Activated CD4-positive, alpha-beta memory T cell treated with anti-CD3 and anti-CD28 coated beads for 36 hours (primary cell): ENCODE measurements at regions of chr10 and their contacts with region 1.

Region 1: GRCh38 chr10:69408318-69409175 is 8.2 kb downstream of the TACR2 start:
- DNase-seq: peak; percentile 93
- H3K4me3 Mint-ChIP-seq: peak overlapping the region; percentile 46
- H3K27ac Mint-ChIP-seq: peak overlapping the region; percentile 76
- H3K4me1 Mint-ChIP-seq: peaks cover 15% of the 10 kb centered on the region
- H3K27me3 Mint-ChIP-seq: peaks cover 2% of the 10 kb centered on the region

Region 2: GRCh38 chr10:68501691-68502090 is 906.9 kb before region 1 on chr10:
- CTCF ChIA-PET with region 1: no interaction called
- POLR2A ChIA-PET with region 1: no interaction called
- intact Hi-C with region 1: no loop called
- DNase-seq: no peak
- H3K4me3 Mint-ChIP-seq: no peak overlapping the region
- H3K27ac Mint-ChIP-seq: no peak overlapping the region
- H3K4me1 Mint-ChIP-seq: no peaks in the 10 kb centered on the region
- H3K27me3 Mint-ChIP-seq: no peaks in the 10 kb centered on the region

Region 3: GRCh38 chr10:69222157-69223027 is 186.2 kb before region 1 on chr10:
- CTCF ChIA-PET with region 1: interaction called, 4 read pairs
- POLR2A ChIA-PET with region 1: no interaction called
- intact Hi-C with region 1: loop called (anchors 5 kb)
- DNase-seq: peak; percentile 92
- H3K4me3 Mint-ChIP-seq: peak overlapping the region; percentile 55
- H3K27ac Mint-ChIP-seq: peak overlapping the region; percentile 91
- H3K4me1 Mint-ChIP-seq: peaks cover 44% of the 10 kb centered on the region
- H3K27me3 Mint-ChIP-seq: no peaks in the 10 kb centered on the region

Region 4: DNA sequence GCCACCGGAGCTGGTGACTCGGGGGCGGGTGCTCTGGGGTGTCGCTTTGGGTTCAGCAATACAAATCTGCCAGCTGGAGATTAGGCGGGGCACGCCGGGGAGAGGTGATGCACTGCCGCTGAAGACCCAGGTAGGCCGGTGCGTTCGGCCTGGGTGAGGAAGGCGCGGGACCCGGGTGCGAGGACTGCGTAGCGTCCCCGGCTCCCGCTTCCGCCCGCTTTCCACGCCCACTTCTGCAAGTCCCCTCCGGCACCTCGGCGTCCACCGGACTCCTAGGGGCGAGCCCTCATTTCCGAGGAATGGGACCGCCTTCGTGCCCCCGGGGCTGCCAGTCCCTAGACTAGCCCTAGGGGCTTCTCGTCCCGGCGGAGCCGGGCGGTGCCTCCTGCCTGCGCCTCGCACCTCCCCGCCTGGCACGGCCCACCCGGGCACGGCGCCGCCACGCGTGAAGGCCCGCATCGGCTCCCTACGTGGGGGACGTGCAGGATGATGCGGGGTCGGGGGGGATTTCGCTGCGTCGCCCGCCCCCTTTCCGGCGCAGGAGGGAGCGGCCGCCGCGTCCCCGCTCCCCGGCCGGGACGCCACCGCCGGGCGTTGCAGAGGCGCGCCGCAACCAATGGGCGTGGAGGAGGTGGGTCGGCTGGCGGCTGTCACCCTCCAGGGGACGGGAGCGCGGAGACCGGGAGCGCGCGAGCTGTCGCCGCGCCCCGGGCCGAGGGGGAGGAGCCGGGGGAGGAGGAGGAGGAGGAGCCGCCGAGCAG is 90.3 kb before region 1 on chr10:
- CTCF ChIA-PET with region 1: interaction called, 14 read pairs
- POLR2A ChIA-PET with region 1: interaction called, 4 read pairs
- intact Hi-C with region 1: loop called (anchors 2 kb)
- DNase-seq: peak; percentile 95
- H3K4me3 Mint-ChIP-seq: peak overlapping the region; percentile 99
- H3K27ac Mint-ChIP-seq: peak overlapping the region; percentile 97
- H3K4me1 Mint-ChIP-seq: peaks cover 50% of the 10 kb centered on the region
- H3K27me3 Mint-ChIP-seq: no peaks in the 10 kb centered on the region

Region 5: DNA sequence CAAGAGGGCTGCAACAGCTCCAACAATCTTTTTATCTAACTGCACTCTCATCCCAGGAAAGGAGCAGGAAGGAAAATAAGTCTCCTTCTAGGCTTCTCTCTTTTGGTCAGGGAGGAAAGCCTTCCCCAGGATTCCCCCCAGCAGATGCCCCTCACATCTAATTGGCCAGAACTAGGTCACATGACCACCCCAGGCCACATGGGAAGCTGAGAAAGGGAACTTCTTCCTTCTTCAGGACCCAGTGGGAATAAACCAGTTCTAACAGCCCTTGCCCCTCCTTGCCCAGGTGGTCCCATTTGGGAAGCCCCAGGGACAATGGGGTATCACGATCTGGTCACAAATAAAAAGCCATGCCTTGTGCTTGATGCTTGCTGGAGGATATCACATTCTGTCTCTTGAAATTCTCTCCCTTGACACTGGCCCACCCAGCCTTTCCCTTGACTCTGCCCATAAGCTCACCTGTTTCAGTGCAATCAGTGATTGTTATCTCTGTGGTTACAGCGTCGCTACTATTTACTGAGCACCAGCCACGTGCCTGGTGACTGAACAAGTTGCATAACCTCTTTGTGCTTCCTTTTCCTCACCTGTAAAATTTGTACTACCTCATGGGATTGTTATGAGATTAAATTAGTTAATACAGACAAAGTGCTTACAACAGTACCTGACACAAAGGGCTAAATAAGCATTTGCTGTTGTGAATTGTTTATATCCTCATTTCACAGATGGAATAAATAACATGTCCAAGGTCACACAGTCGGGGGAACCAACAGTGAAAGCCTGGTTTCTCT is 17.2 kb after region 1 on chr10:
- CTCF ChIA-PET with region 1: interaction called, 8 read pairs
- POLR2A ChIA-PET with region 1: interaction called, 3 read pairs
- intact Hi-C with region 1: loop called (anchors 2 kb)
- DNase-seq: peak; percentile 35
- H3K4me3 Mint-ChIP-seq: no peak overlapping the region
- H3K27ac Mint-ChIP-seq: peak overlapping the region; percentile 54
- H3K4me1 Mint-ChIP-seq: peaks cover 49% of the 10 kb centered on the region
- H3K27me3 Mint-ChIP-seq: no peaks in the 10 kb centered on the region

Region 6: GRCh38 chr10:69515699-69516259 is 107.2 kb after region 1 on chr10:
- CTCF ChIA-PET with region 1: interaction called, 50 read pairs
- POLR2A ChIA-PET with region 1: no interaction called
- intact Hi-C with region 1: no loop called
- DNase-seq: peak; percentile 86
- H3K4me3 Mint-ChIP-seq: no peak overlapping the region
- H3K27ac Mint-ChIP-seq: no peak overlapping the region
- H3K4me1 Mint-ChIP-seq: no peaks in the 10 kb centered on the region
- H3K27me3 Mint-ChIP-seq: no peaks in the 10 kb centered on the region